Activated T-helper 1 cell treated with anti-CD3 and anti-CD28 coated beads, Interleukin-12 subunit alpha, Interleukin-12 subunit beta, Interleukin-2, Interleukin-4 antibody, amounts not matched to agents 30 ng/mL and 10 ng/mL and 1 ng/mL, durations not matched to agents 14 hours and 24 hours and 36 hours (primary cell): ENCODE measurements at regions of chr5 and their contacts with region 1.

Region 1: GRCh38 chr5:100777680-100778281 is 125.3 kb downstream of the ST8SIA4 start:
- DNase-seq: no peak
- H3K4me3 Mint-ChIP-seq: peak overlapping the region; percentile 34
- H3K27ac Mint-ChIP-seq: peak overlapping the region; percentile 70
- H3K4me1 Mint-ChIP-seq: peaks cover 42% of the 10 kb centered on the region
- H3K27me3 Mint-ChIP-seq: no peaks in the 10 kb centered on the region

Region 2: DNA sequence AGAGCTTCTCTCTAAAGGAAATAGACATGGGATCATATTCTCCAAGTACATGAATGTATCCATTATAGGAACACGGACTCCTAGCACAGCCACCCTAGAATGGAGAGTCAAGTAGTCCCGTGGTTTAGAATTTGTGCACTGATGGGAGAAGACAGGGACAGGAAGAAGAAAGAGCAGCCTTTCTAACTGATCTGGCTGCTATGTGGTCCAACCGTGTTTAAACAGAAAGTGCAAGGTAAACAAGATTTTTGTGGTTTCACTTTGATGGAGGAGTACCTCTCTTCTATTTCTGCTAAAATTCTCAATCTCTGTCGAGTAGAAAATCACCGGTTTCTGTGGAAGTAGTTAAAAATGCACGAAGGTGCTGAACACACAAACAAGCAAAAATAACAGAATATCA is 46.0 kb before region 1 on chr5:
- intact Hi-C with region 1: loop called (anchors 5 kb)
- DNase-seq: peak; percentile 20
- H3K4me3 Mint-ChIP-seq: peak overlapping the region; percentile 71
- H3K27ac Mint-ChIP-seq: peak overlapping the region; percentile 81
- H3K4me1 Mint-ChIP-seq: peaks cover 14% of the 10 kb centered on the region
- H3K27me3 Mint-ChIP-seq: no peaks in the 10 kb centered on the region

Region 3: DNA sequence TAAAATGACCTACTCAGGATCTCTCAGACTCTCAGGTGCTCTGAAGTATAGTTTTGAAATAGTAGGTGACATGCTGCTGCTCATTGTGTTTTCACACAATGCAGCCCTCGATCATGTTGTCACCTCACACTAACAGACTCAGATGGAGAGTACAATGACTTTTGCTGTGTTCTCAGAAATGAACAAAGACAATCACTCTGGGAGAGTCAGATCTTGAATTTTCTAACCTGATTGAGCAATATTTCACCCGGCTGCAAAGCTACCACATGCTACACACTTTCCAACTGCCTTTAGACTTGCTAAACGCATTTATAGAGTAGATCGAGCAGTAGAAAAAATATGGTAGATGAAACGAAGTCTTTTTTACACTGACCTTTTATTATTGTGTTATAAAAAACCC is 11.9 kb after region 1 on chr5:
- intact Hi-C with region 1: loop called (anchors 1 kb)
- DNase-seq: no peak
- H3K4me3 Mint-ChIP-seq: peak overlapping the region; percentile 2
- H3K27ac Mint-ChIP-seq: peak overlapping the region; percentile 60
- H3K4me1 Mint-ChIP-seq: peaks cover 23% of the 10 kb centered on the region
- H3K27me3 Mint-ChIP-seq: no peaks in the 10 kb centered on the region

Region 4: GRCh38 chr5:100840384-100840783 is 62.6 kb after region 1 on chr5:
- intact Hi-C with region 1: loop called (anchors 1 kb)
- DNase-seq: peak; percentile 22
- H3K4me3 Mint-ChIP-seq: no peak overlapping the region
- H3K27ac Mint-ChIP-seq: peak overlapping the region; percentile 95
- H3K4me1 Mint-ChIP-seq: peaks cover 71% of the 10 kb centered on the region
- H3K27me3 Mint-ChIP-seq: no peaks in the 10 kb centered on the region

Region 5: DNA sequence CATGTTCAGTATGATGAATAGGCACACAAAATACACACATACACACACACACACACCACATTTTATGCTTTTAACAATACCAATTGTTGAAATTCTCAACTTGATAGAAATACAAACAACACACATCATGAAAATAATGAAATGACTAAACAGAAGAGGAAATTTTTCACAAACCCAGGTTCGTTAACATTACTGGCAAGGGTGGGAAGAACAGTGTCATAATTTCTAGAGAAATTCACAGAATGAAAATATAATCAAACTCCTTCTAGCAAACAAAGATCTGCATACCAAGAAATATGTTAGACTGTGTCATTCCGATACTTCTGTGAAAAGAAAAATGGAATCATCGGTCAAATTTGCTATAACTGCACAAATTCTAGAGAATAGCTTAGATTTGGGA is 83.4 kb after region 1 on chr5:
- intact Hi-C with region 1: loop called (anchors 1 kb)
- DNase-seq: no peak
- H3K4me3 Mint-ChIP-seq: peak overlapping the region; percentile 77
- H3K27ac Mint-ChIP-seq: peak overlapping the region; percentile 97
- H3K4me1 Mint-ChIP-seq: peaks cover 64% of the 10 kb centered on the region
- H3K27me3 Mint-ChIP-seq: no peaks in the 10 kb centered on the region